Naive thymus-derived CD4-positive, alpha-beta T cell (primary cell): ENCODE measurements at regions of chr15 and their contacts with region 1.

Region 1: GRCh38 chr15:31472636-31473384 is 146.2 kb downstream of the KLF13 start:
- DNase-seq: peak in 8 of 9 donors; percentile 48 to 71 (median 66)
- ATAC-seq: peak; percentile 90
- H3K4me3 ChIP-seq: peak overlapping the region; percentile 28
- H3K4me3 Mint-ChIP-seq: peak overlapping the region; percentile 69 to 90 (median 79)
- H3K27ac ChIP-seq: peak overlapping the region; percentile 66
- H3K27ac Mint-ChIP-seq: peak overlapping the region; percentile 90 to 96 (median 93)
- H3K4me1 ChIP-seq: peaks cover 29 to 34% of the 10 kb centered on the region in 2 donors
- H3K4me1 Mint-ChIP-seq: peaks cover 22 to 62% (median 58%) of the 10 kb centered on the region in 7 donors
- H3K27me3 ChIP-seq: no peaks in the 10 kb centered on the region
- H3K27me3 Mint-ChIP-seq: no peaks in the 10 kb centered on the region

Region 2: GRCh38 chr15:31391687-31392671 is 80.8 kb before region 1 on chr15:
- CTCF ChIA-PET with region 1: no interaction called
- POLR2A ChIA-PET with region 1: interaction called, 10 read pairs
- intact Hi-C with region 1: loop called in 1 of 2 experiments (anchors 5 kb)
- DNase-seq: peak; percentile 61 to 87 (median 73)
- ATAC-seq: peak; percentile 91
- H3K4me3 ChIP-seq: peak overlapping the region; percentile 72
- H3K4me3 Mint-ChIP-seq: peak overlapping the region; percentile 81 to 95 (median 90)
- H3K27ac ChIP-seq: peak overlapping the region; percentile 68
- H3K27ac Mint-ChIP-seq: peak overlapping the region; percentile 79 to 95 (median 88)
- H3K4me1 ChIP-seq: peaks cover 13 to 30% of the 10 kb centered on the region in 2 donors
- H3K4me1 Mint-ChIP-seq: peaks cover 21 to 61% (median 46%) of the 10 kb centered on the region in 7 donors
- H3K27me3 ChIP-seq: no peaks in the 10 kb centered on the region
- H3K27me3 Mint-ChIP-seq: no peaks in the 10 kb centered on the region

Region 3: DNA sequence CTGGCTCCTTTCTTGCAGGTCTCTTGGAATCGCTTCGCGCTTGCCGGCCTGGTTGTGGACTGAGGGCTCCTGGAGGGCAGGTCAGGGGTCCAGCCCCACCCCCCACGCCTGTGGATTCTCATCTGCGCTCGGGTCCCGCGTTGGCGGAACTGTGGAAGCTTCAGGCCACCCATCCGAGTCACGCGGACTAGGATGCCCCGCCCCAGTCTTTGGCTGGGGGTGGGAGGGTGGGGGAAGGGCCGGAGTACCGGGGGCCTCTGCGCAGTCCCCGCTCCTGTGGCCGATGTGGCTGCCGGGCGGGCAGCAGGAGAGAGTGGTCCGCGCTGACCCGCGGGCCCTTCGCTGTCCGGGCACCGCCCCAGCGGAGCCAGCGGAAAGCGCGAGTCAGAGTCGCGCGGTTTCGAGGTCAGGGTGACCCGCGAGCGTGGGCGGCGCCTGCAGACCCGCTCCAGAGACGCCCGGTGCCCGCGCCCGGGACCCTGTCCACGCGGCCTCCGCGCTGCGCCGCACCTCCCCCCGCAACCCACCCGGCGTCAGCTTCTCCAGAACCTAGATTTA is 32.0 kb before region 1 on chr15:
- CTCF ChIA-PET with region 1: interaction called, 18 read pairs
- POLR2A ChIA-PET with region 1: interaction called, 33 read pairs
- intact Hi-C with region 1: no loop called
- DNase-seq: peak in 3 of 9 donors; percentile 31 to 74 (median 42)
- ATAC-seq: peak; percentile 63
- H3K4me3 ChIP-seq: peak overlapping the region; percentile 43
- H3K4me3 Mint-ChIP-seq: peak overlapping the region; percentile 65 to 87 (median 77)
- H3K27ac ChIP-seq: peak overlapping the region; percentile 64
- H3K27ac Mint-ChIP-seq: peak overlapping the region; percentile 51 to 100 (median 84)
- H3K4me1 ChIP-seq: peaks cover 32 to 50% of the 10 kb centered on the region in 2 donors
- H3K4me1 Mint-ChIP-seq: peaks cover 22 to 71% (median 58%) of the 10 kb centered on the region in 7 donors
- H3K27me3 ChIP-seq: no peaks in the 10 kb centered on the region
- H3K27me3 Mint-ChIP-seq: no peaks in the 10 kb centered on the region

Region 4: DNA sequence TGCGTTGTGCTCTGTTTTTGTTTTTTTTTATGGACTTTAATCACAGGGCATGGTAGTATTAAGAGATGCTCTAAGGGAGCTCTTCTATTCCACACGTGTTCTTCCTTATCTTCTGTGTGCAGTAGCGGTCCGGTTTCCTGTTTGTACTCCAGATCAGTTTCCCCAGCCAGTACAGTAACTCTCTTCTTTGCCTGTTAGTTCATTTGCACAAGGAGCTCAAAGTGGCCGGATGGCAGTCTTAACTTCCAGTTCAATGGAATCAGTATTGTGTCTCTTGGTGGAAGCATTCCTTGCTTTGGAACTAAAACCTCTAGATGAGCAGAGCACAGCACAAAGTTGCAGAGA is 24.2 kb before region 1 on chr15:
- CTCF ChIA-PET with region 1: no interaction called
- POLR2A ChIA-PET with region 1: interaction called, 4 read pairs
- intact Hi-C with region 1: loop called in 1 of 2 experiments (anchors 2 kb)
- DNase-seq: no peak
- ATAC-seq: no peak
- H3K4me3 ChIP-seq: no peak overlapping the region
- H3K4me3 Mint-ChIP-seq: peak overlapping the region in 6 of 10 donors; percentile 9 to 37 (median 27)
- H3K27ac ChIP-seq: no peak overlapping the region
- H3K27ac Mint-ChIP-seq: peak overlapping the region in 1 of 9 donors; percentile 49
- H3K4me1 ChIP-seq: peaks cover 0 to 6% of the 10 kb centered on the region in 2 donors
- H3K4me1 Mint-ChIP-seq: peaks cover 10 to 20% (median 14%) of the 10 kb centered on the region in 7 donors
- H3K27me3 ChIP-seq: no peaks in the 10 kb centered on the region
- H3K27me3 Mint-ChIP-seq: no peaks in the 10 kb centered on the region

Region 5: GRCh38 chr15:31458591-31459399 is 14.0 kb before region 1 on chr15:
- CTCF ChIA-PET with region 1: interaction called, 3 read pairs
- POLR2A ChIA-PET with region 1: interaction called, 18 read pairs
- intact Hi-C with region 1: loop called in 1 of 2 experiments (anchors 1 kb)
- DNase-seq: peak in 3 of 9 donors; percentile 19 to 64 (median 32)
- ATAC-seq: peak; percentile 83
- H3K4me3 ChIP-seq: no peak overlapping the region
- H3K4me3 Mint-ChIP-seq: peak overlapping the region in 4 of 10 donors; percentile 0 to 72 (median 4)
- H3K27ac ChIP-seq: no peak overlapping the region
- H3K27ac Mint-ChIP-seq: peak overlapping the region in 7 of 9 donors; percentile 4 to 82 (median 70)
- H3K4me1 ChIP-seq: peaks cover 0 to 8% of the 10 kb centered on the region in 2 donors
- H3K4me1 Mint-ChIP-seq: peaks cover 5 to 33% (median 28%) of the 10 kb centered on the region in 7 donors
- H3K27me3 ChIP-seq: no peaks in the 10 kb centered on the region
- H3K27me3 Mint-ChIP-seq: no peaks in the 10 kb centered on the region